Caco-2 (cell line): ENCODE measurements at regions of chr9 and their contacts with region 1.

Region 1: GRCh38 chr9:99266255-99267023 is 44.4 kb downstream of the SEC61B start:
- DNase-seq: peak; percentile 69 to 74
- H3K4me3 ChIP-seq: no peak overlapping the region
- H3K4me3 Mint-ChIP-seq: no peak overlapping the region
- H3K27ac Mint-ChIP-seq: no peak overlapping the region
- H3K4me1 ChIP-seq: no peaks in the 10 kb centered on the region
- H3K4me1 Mint-ChIP-seq: peaks cover 11% of the 10 kb centered on the region
- H3K27me3 ChIP-seq: no peaks in the 10 kb centered on the region
- H3K27me3 Mint-ChIP-seq: peaks cover 12% of the 10 kb centered on the region
- CTCF ChIP-seq: peak; percentile 76 to 79

Region 2: DNA sequence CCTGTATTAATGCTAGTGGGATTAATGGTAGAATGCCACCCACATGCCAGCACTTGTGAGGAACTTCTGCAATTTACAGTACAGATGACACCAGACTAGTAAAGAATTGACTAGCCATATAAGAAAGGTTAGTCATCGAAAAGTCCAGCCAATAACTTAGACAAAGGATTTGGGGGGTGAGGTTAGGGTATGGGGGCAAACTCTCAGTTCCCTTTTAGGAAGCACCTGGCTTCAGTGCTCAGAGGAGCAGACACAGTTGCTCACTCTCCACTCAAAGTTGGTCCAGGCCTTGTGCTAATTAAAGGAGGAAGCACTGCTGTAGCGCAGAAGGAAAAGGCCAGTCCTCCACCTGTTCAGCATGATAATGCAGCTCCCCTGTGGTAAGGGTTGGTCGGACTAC is 136.4 kb before region 1 on chr9:
- CTCF ChIA-PET with region 1: no interaction called
- POLR2A ChIA-PET with region 1: no interaction called
- intact Hi-C with region 1: no loop called
- DNase-seq: no peak
- H3K4me3 ChIP-seq: no peak overlapping the region
- H3K4me3 Mint-ChIP-seq: no peak overlapping the region
- H3K27ac Mint-ChIP-seq: no peak overlapping the region
- H3K4me1 ChIP-seq: peaks cover 3% of the 10 kb centered on the region; the same call in 1 of the 2 replicates
- H3K4me1 Mint-ChIP-seq: no peaks in the 10 kb centered on the region
- H3K27me3 ChIP-seq: no peaks in the 10 kb centered on the region
- H3K27me3 Mint-ChIP-seq: no peaks in the 10 kb centered on the region
- CTCF ChIP-seq: no peak

Region 3: DNA sequence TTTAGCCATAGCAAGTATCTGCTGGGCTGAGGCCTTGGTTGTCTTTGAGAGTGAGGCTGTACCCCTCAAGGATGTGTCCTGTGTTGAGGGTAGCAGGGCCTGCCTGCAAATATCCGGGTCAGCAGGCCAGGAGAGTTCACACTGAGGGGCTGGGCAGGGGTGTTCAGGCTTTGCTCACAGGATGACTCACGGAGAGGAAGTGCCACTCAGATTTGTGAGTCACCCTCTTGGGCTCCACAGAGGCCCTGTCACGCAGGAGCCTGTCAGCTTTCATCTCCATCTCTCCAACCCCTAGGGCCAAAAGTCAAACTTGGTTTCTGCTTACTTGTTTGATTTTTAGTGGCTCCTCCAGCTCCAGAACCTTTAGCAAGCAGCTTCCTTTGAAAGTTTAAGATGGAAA is 167.1 kb after region 1 on chr9:
- CTCF ChIA-PET with region 1: no interaction called
- POLR2A ChIA-PET with region 1: no interaction called
- intact Hi-C with region 1: loop called (anchors 10 kb)
- DNase-seq: peak; percentile 11 to 66
- H3K4me3 ChIP-seq: no peak overlapping the region
- H3K4me3 Mint-ChIP-seq: no peak overlapping the region
- H3K27ac Mint-ChIP-seq: no peak overlapping the region
- H3K4me1 ChIP-seq: peaks cover 16% of the 10 kb centered on the region; the same call in 1 of the 2 replicates
- H3K4me1 Mint-ChIP-seq: no peaks in the 10 kb centered on the region
- H3K27me3 ChIP-seq: no peaks in the 10 kb centered on the region
- H3K27me3 Mint-ChIP-seq: no peaks in the 10 kb centered on the region
- CTCF ChIP-seq: no peak